Dorsolateral prefrontal cortex (tissue), 120 donors: ENCODE measurements at regions of chr18 and their contacts with region 1.

Region 1: GRCh38 chr18:5600378-5601071 is 56.7 kb upstream of the EPB41L3 start:
- DNase-seq: no peak
- H3K4me3 ChIP-seq: no peak overlapping the region
- H3K27ac ChIP-seq: peak overlapping the region in 7 of 59 donors; percentile 6 to 53 (median 37)
- H3K27me3 ChIP-seq: no peaks in the 10 kb centered on the region
- CTCF ChIP-seq: peak; percentile 24 to 78 (median 55)

Region 2: GRCh38 chr18:5841518-5841917 is 241.0 kb after region 1 on chr18:
- intact Hi-C with region 1: loop called (anchors 5 to 10 kb)
- DNase-seq: no peak
- H3K4me3 ChIP-seq: no peak overlapping the region
- H3K27ac ChIP-seq: no peak overlapping the region
- H3K27me3 ChIP-seq: peaks cover 0 to 3% (median 0%) of the 10 kb centered on the region in 45 donors
- CTCF ChIP-seq: peak in 41 of 56 donors; percentile 9 to 55 (median 30)